Activated CD4-positive, alpha-beta memory T cell treated with anti-CD3 and anti-CD28 coated beads for 36 hours (primary cell): ENCODE measurements at regions of chr11 and their contacts with region 1.

Region 1: GRCh38 chr11:118251858-118252652 is at the start of gene MPZL3:
- DNase-seq: peak; percentile 89
- H3K4me3 Mint-ChIP-seq: peak within 1 kb of the TSS; percentile 99
- H3K27ac Mint-ChIP-seq: peak within 1 kb of the TSS; percentile 97
- H3K4me1 Mint-ChIP-seq: peaks cover 37% of the 10 kb centered on the region
- H3K27me3 Mint-ChIP-seq: no peaks in the 10 kb centered on the region
- total RNA-seq, gene MPZL3: 47.3 to 49.0 TPM

Region 2: DNA sequence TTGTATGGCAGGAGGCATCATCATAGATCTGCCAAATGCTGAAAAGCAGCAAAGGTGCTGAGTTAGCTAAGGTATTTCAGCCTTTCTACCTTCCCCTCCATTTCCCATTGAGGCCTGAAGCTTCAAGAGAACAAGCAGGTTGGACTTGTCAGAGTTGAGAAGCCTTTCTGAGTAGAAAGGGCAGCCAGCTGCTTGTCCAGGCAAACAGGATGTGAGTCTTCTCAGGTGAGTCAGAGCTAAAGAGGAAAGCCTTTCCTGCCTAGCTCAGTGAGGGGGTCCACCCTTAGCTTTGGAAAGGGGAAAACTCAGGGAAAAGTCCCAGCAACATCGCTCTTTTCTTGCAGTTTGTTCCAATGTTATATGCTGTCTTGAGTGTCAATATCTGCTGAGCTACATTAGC is 25.3 kb after region 1 on chr11:
- CTCF ChIA-PET with region 1: no interaction called
- POLR2A ChIA-PET with region 1: no interaction called
- intact Hi-C with region 1: loop called (anchors 2 kb)
- DNase-seq: peak; percentile 42
- H3K4me3 Mint-ChIP-seq: no peak overlapping the region
- H3K27ac Mint-ChIP-seq: peak overlapping the region; percentile 40
- H3K4me1 Mint-ChIP-seq: peaks cover 40% of the 10 kb centered on the region
- H3K27me3 Mint-ChIP-seq: no peaks in the 10 kb centered on the region